ENCODE measurements at regions of chr13 and their contacts with region 1.

Region 1: DNA sequence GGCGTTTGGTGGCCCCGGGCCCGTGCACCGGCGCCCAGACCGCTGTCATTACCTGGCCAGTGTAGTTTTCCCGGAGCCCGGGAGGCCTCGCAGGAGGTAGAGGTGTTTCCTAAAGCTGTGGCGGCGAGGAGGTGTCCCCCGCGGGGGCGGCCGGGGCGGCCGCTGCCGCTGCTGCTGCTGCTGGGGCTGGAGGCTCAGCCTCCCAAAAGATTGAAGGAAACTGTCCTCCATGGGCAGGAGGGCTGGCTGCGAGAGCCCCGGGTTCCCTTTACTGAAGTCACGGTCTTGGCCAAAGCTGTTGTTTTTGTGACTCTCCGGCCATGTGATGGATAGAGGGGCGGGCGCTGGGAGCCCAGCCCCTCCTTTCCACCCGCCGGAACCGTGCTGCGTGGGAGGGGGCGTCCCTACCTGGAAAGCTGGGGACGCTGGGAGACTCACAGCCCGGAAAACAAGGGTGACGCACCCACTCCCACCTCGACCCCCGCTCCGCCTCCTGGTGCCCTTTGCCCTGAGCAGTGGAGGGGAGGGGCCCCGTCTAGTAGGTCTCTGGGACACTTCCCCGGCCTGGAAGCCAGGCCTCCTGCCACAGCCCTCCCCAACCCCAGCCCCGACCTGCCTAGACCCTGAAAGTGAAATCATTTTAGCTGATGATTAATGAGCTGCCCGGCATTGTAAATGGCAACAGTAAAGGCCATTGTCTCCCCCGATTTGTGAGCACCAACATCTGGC is at the start of gene N4BP2L1:
- DNase-seq: peak; percentile 77 to 90
- ATAC-seq: peak; percentile 72 to 83 (median 73)
- H3K4me3 ChIP-seq: peak within 1 kb of the TSS; percentile 51
- H3K4me3 Mint-ChIP-seq: peak within 1 kb of the TSS; percentile 99
- H3K27ac ChIP-seq: peak within 1 kb of the TSS; percentile 96
- H3K27ac Mint-ChIP-seq: peak within 1 kb of the TSS; percentile 98 to 100
- H3K4me1 ChIP-seq: peaks cover 40% of the 10 kb centered on the region
- H3K4me1 Mint-ChIP-seq: peaks cover 42 to 49% of the 10 kb centered on the region in 2 donors
- H3K27me3 ChIP-seq: no peaks in the 10 kb centered on the region
- H3K27me3 Mint-ChIP-seq: no peaks in the 10 kb centered on the region
- CTCF ChIP-seq: no peak
- total RNA-seq, gene N4BP2L1: 52.1 to 82.9 (median 75.4) TPM

Region 2: GRCh38 chr13:32237681-32238080 is 190.3 kb before region 1 on chr13:
- intact Hi-C with region 1: no loop called
- DNase-seq: no peak
- ATAC-seq: no peak
- H3K4me3 ChIP-seq: no peak overlapping the region
- H3K4me3 Mint-ChIP-seq: no peak overlapping the region
- H3K27ac ChIP-seq: no peak overlapping the region
- H3K27ac Mint-ChIP-seq: no peak overlapping the region
- H3K4me1 ChIP-seq: no peaks in the 10 kb centered on the region
- H3K4me1 Mint-ChIP-seq: no peaks in the 10 kb centered on the region
- H3K27me3 ChIP-seq: no peaks in the 10 kb centered on the region
- H3K27me3 Mint-ChIP-seq: no peaks in the 10 kb centered on the region
- CTCF ChIP-seq: no peak

Region 3: DNA sequence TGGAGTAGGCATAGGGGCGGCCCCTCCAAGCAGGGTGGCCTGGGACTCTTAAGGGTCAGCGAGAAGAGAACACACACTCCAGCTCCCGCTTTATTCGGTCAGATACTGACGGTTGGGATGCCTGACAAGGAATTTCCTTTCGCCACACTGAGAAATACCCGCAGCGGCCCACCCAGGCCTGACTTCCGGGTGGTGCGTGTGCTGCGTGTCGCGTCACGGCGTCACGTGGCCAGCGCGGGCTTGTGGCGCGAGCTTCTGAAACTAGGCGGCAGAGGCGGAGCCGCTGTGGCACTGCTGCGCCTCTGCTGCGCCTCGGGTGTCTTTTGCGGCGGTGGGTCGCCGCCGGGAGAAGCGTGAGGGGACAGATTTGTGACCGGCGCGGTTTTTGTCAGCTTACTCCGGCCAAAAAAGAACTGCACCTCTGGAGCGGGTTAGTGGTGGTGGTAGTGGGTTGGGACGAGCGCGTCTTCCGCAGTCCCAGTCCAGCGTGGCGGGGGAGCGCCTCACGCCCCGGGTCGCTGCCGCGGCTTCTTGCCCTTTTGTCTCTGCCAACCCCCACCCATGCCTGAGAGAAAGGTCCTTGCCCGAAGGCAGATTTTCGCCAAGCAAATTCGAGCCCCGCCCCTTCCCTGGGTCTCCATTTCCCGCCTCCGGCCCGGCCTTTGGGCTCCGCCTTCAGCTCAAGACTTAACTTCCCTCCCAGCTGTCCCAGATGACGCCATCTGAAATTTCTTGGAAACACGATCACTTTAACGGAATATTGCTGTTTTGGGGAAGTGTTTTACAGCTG is 112.6 kb before region 1 on chr13 and contains the starts of genes BRCA2 and ZAR1L:
- intact Hi-C with region 1: loop called (anchors 1 kb)
- DNase-seq: peak; percentile 87 to 95
- ATAC-seq: peak; percentile 80 to 93 (median 86)
- H3K4me3 ChIP-seq: peak within 1 kb of the TSS; percentile 87
- H3K4me3 Mint-ChIP-seq: peak within 1 kb of the TSS; percentile 98
- H3K27ac ChIP-seq: peak within 1 kb of the TSS; percentile 99
- H3K27ac Mint-ChIP-seq: peak within 1 kb of the TSS; percentile 98 to 100
- H3K4me1 ChIP-seq: peaks cover 18% of the 10 kb centered on the region
- H3K4me1 Mint-ChIP-seq: peaks cover 14 to 21% of the 10 kb centered on the region in 2 donors
- H3K27me3 ChIP-seq: no peaks in the 10 kb centered on the region
- H3K27me3 Mint-ChIP-seq: no peaks in the 10 kb centered on the region
- CTCF ChIP-seq: no peak
- total RNA-seq, gene BRCA2: 3.6 to 4.3 (median 3.6) TPM
- total RNA-seq, gene ZAR1L: 0.23 TPM in 1 of 3 donors, not detected in the others

Region 4: DNA sequence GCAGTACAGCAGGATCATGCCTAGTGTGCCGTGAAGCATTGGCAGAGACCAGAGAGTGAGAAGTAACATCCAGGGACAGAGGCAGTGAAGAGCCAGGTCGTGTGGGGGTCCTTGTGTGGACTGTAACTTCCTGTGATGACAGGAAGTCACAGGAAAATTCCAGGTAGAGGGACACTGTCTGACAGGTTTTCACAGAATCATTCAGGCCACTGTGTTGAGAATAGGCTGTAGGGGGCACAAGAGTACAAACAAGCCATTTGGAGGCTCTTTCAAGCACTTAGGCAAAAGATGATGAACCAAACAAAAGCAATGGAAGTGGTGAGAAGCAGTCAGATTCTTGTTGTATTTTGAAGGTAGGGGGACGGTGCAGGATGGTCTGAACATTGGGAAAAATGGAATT is 46.5 kb before region 1 on chr13:
- intact Hi-C with region 1: loop called (anchors 5 kb)
- DNase-seq: peak in 1 of 2 donors; percentile 63
- ATAC-seq: peak in 2 of 3 donors; percentile 72 to 73
- H3K4me3 ChIP-seq: no peak overlapping the region
- H3K4me3 Mint-ChIP-seq: no peak overlapping the region
- H3K27ac ChIP-seq: no peak overlapping the region
- H3K27ac Mint-ChIP-seq: no peak overlapping the region
- H3K4me1 ChIP-seq: no peaks in the 10 kb centered on the region
- H3K4me1 Mint-ChIP-seq: no peaks in the 10 kb centered on the region
- H3K27me3 ChIP-seq: no peaks in the 10 kb centered on the region
- H3K27me3 Mint-ChIP-seq: no peaks in the 10 kb centered on the region
- CTCF ChIP-seq: peak; percentile 53

Region 5: DNA sequence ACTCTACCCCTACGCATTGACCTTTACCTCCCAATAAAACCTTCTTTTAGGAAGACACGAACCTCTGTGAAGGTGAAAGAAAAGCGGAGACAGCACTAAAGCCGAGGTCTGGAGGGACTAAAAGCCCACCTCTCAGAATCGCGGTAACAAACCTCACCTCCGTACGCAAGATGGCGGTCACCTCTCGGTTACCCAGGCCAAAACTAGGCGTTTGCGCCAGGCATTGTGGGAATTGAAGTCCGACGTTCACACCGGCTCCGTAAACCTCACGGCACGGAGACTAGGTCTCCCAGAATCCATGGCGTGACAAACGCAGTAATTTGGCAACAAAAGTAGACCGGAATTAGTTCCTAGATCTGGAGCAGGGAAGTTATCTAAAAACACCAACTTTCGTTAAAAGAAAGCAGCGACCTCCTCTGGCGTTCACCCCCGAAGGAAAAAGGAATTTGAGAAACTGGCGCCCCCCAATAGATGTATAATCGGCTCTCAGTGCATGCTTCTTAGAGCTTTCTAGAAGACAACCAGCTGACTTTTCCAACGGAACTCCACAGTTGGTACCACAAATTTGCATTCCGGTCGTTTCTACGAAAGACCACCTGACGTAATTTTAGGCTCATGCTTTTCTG is 110.7 kb after region 1 on chr13 and contains the start of gene N4BP2L2:
- intact Hi-C with region 1: loop called (anchors 1 kb)
- DNase-seq: peak; percentile 85 to 97
- ATAC-seq: peak; percentile 94 to 98 (median 96)
- H3K4me3 ChIP-seq: peak within 1 kb of the TSS; percentile 96
- H3K4me3 Mint-ChIP-seq: peak within 1 kb of the TSS; percentile 99
- H3K27ac ChIP-seq: peak within 1 kb of the TSS; percentile 99
- H3K27ac Mint-ChIP-seq: peak within 1 kb of the TSS; percentile 98 to 99
- H3K4me1 ChIP-seq: peaks cover 15% of the 10 kb centered on the region
- H3K4me1 Mint-ChIP-seq: peaks cover 48 to 50% of the 10 kb centered on the region in 2 donors
- H3K27me3 ChIP-seq: no peaks in the 10 kb centered on the region
- H3K27me3 Mint-ChIP-seq: peaks cover 0 to 4% of the 10 kb centered on the region in 2 donors
- CTCF ChIP-seq: no peak
- total RNA-seq, gene N4BP2L2: 195 to 247 (median 221) TPM

Region 6: GRCh38 chr13:32586080-32586900 is 158.3 kb after region 1 on chr13 and contains the start of gene PDS5B:
- intact Hi-C with region 1: loop called (anchors 2 kb)
- DNase-seq: peak; percentile 97 to 98
- ATAC-seq: peak; percentile 88 to 98 (median 91)
- H3K4me3 ChIP-seq: peak within 1 kb of the TSS; percentile 88
- H3K4me3 Mint-ChIP-seq: peak within 1 kb of the TSS; percentile 97
- H3K27ac ChIP-seq: peak within 1 kb of the TSS; percentile 88
- H3K27ac Mint-ChIP-seq: peak within 1 kb of the TSS; percentile 94 to 95
- H3K4me1 ChIP-seq: peaks cover 9% of the 10 kb centered on the region
- H3K4me1 Mint-ChIP-seq: peaks cover 40 to 41% of the 10 kb centered on the region in 2 donors
- H3K27me3 ChIP-seq: no peaks in the 10 kb centered on the region
- H3K27me3 Mint-ChIP-seq: peaks cover 0 to 3% of the 10 kb centered on the region in 2 donors
- CTCF ChIP-seq: peak; percentile 87
- total RNA-seq, gene PDS5B: 59.4 to 70.6 (median 64.7) TPM

Region 7: DNA sequence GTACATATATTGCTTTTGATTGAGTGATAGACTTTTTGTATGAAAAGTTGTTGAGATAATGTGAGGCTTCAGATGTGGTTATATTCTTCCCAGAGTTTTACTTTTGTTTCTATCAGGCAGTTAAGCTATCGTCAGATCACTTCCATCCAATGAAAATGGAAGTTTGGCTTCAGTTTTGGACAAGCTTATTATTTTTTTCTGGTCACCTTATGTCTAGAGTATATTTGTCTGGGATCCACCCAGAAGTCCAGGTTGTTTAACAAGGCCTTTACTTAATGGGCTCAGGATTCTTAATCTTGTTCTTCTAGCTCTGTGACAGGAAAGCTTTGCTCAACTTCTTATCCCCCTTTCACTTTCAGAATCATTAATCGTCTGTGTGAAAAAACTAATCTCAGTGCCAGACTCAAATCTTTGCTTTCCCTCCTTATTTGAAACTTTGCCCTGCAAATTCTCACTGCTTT is 309.1 kb after region 1 on chr13:
- intact Hi-C with region 1: loop called (anchors 5 kb)
- DNase-seq: peak in 1 of 2 donors; percentile 64
- ATAC-seq: peak; percentile 80 to 83 (median 83)
- H3K4me3 ChIP-seq: peak overlapping the region; percentile 22
- H3K4me3 Mint-ChIP-seq: peak overlapping the region; percentile 87
- H3K27ac ChIP-seq: peak overlapping the region; percentile 96
- H3K27ac Mint-ChIP-seq: peak overlapping the region; percentile 94 to 96
- H3K4me1 ChIP-seq: no peaks in the 10 kb centered on the region
- H3K4me1 Mint-ChIP-seq: peaks cover 19 to 21% of the 10 kb centered on the region in 2 donors
- H3K27me3 ChIP-seq: no peaks in the 10 kb centered on the region
- H3K27me3 Mint-ChIP-seq: no peaks in the 10 kb centered on the region
- CTCF ChIP-seq: no peak

Region 8: GRCh38 chr13:33542283-33543088 is 1114.5 kb after region 1 on chr13:
- intact Hi-C with region 1: loop called (anchors 2 kb)
- DNase-seq: peak; percentile 99
- ATAC-seq: peak; percentile 82 to 94 (median 83)
- H3K4me3 ChIP-seq: peak overlapping the region; percentile 71
- H3K4me3 Mint-ChIP-seq: peak overlapping the region; percentile 96
- H3K27ac ChIP-seq: peak overlapping the region; percentile 100
- H3K27ac Mint-ChIP-seq: peak overlapping the region; percentile 99 to 100
- H3K4me1 ChIP-seq: peaks cover 6% of the 10 kb centered on the region
- H3K4me1 Mint-ChIP-seq: peaks cover 31 to 36% of the 10 kb centered on the region in 2 donors
- H3K27me3 ChIP-seq: no peaks in the 10 kb centered on the region
- H3K27me3 Mint-ChIP-seq: no peaks in the 10 kb centered on the region
- CTCF ChIP-seq: peak; percentile 62